Stomach (tissue), 19 donors: ENCODE measurements at regions of chr20 and their contacts with region 1.

Region 1: DNA sequence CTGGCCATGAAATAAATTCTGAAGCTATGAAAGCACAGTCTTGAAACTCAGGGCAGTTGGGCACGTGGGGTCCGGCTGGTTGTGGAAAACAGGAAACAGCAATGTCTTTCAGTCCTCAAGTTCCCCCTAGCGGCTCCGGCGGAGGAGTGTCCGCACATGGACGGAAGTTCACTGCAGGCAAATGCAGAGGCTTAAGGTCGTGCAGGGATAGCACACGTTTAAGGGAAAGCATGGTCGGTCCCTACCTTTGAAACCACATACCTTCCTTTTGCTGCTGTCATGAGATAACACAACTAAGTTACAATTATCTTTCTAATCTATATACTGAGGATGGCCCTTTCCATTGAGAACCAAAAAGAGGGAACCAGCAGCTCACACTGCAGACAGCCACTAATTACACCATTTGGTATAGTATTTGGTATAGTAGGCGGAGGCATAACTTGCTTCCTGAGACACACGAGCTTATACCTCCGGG is 52.6 kb upstream of the NFATC2 start:
- DNase-seq: peak; percentile 88 to 95
- H3K4me3 ChIP-seq: no peak overlapping the region
- H3K27ac ChIP-seq: peak overlapping the region in 2 of 5 donors; percentile 2 to 66
- H3K4me1 ChIP-seq: peaks cover 12 to 27% (median 18%) of the 10 kb centered on the region in 4 donors
- H3K27me3 ChIP-seq: no peaks in the 10 kb centered on the region
- CTCF ChIP-seq: peak in 6 of 7 experiments; percentile 74 to 92 (median 80)
- EP300 ChIP-seq: no peak
- POLR2A ChIP-seq: no peak

Region 2: GRCh38 chr20:51372176-51372803 is 222.8 kb before region 1 on chr20:
- intact Hi-C with region 1: loop called (anchors 5 kb)
- DNase-seq: peak; percentile 78 to 90
- H3K4me3 ChIP-seq: no peak overlapping the region
- H3K27ac ChIP-seq: no peak overlapping the region
- H3K4me1 ChIP-seq: peaks cover 20 to 28% (median 27%) of the 10 kb centered on the region in 4 donors
- H3K27me3 ChIP-seq: no peaks in the 10 kb centered on the region
- CTCF ChIP-seq: peak in 5 of 7 experiments; percentile 74 to 84 (median 75)
- EP300 ChIP-seq: no peak
- POLR2A ChIP-seq: no peak